ENCODE measurements at regions of chr11 and their contacts with region 1.

Region 1: GRCh38 chr11:64688534-64688982 is 34.4 kb downstream of the NRXN2 start:
- DNase-seq: peak; percentile 96
- ATAC-seq: peak; percentile 98
- H3K4me3 Mint-ChIP-seq: peak overlapping the region; percentile 38
- H3K27ac Mint-ChIP-seq: no peak overlapping the region
- H3K4me1 Mint-ChIP-seq: peaks cover 26% of the 10 kb centered on the region
- H3K27me3 Mint-ChIP-seq: peaks cover 9% of the 10 kb centered on the region
- CTCF ChIP-seq: peak; percentile 93

Region 2: DNA sequence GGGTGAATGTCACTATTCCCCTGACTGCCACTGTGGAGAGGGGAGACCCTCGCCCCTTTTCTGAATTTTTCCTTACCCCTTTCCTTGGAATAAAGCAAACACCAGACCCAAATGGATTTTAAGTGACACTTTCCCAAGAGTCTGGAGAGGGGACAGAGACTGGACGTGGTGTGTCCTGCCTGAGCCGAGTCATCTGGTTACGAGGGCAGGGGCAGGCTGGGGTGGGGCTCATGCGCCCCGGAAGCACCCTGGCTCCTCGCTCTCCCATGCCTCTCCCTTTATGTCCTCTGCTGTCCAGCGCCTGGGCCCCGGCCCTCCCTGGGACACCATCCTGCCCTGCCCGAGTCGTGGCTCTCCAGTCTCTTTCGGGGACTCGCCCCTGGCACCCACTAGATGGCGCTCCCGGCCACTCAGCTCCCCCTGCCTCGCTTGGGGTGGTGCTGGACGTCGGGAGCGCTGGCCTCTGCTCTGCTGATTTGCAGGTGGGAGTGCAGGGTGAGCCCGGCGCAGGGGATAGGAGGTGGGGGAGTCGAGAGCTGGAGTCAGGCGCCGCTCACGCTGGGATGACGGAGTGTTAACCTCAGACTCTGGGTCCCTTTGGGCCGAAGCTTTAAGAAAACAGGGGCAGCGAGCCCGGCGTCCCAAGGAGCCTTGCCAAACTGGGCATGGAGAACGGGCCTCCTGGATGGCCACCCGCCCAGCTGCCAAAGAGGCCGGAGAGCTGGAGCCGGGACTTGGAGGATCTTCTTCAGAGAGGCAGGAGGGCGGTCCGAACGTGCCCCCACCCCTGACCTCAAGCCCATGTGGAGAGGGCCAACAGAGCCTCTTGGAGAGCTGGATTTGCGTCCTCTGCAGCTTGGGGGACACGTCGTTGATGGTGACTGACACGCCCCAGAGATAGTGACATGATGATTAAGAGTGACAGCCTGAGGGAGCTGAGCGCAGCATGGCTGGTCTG is 239.7 kb before region 1 on chr11:
- CTCF ChIA-PET with region 1: interaction called, 10 read pairs
- POLR2A ChIA-PET with region 1: no interaction called
- intact Hi-C with region 1: no loop called
- DNase-seq: peak; percentile 82
- ATAC-seq: peak; percentile 80
- H3K4me3 Mint-ChIP-seq: peak overlapping the region; percentile 61
- H3K27ac Mint-ChIP-seq: no peak overlapping the region
- H3K4me1 Mint-ChIP-seq: peaks cover 9% of the 10 kb centered on the region
- H3K27me3 Mint-ChIP-seq: peaks cover 7% of the 10 kb centered on the region
- CTCF ChIP-seq: peak; percentile 81

Region 3: GRCh38 chr11:64703048-64703447 is 14.5 kb after region 1 on chr11:
- CTCF ChIA-PET with region 1: interaction called, 55 read pairs
- POLR2A ChIA-PET with region 1: interaction called, 4 read pairs
- intact Hi-C with region 1: no loop called
- DNase-seq: no peak
- ATAC-seq: no peak
- H3K4me3 Mint-ChIP-seq: no peak overlapping the region
- H3K27ac Mint-ChIP-seq: no peak overlapping the region
- H3K4me1 Mint-ChIP-seq: no peaks in the 10 kb centered on the region
- H3K27me3 Mint-ChIP-seq: peaks cover 8% of the 10 kb centered on the region
- CTCF ChIP-seq: no peak

Region 4: GRCh38 chr11:64723117-64723906 is 34.8 kb after region 1 on chr11 and contains the start of gene NRXN2:
- CTCF ChIA-PET with region 1: interaction called, 13 read pairs
- POLR2A ChIA-PET with region 1: interaction called, 4 read pairs
- intact Hi-C with region 1: loop called (anchors 5 kb)
- DNase-seq: peak; percentile 89
- ATAC-seq: peak; percentile 97
- H3K4me3 Mint-ChIP-seq: peak within 1 kb of the TSS; percentile 62
- H3K27ac Mint-ChIP-seq: peak within 1 kb of the TSS; percentile 59
- H3K4me1 Mint-ChIP-seq: peaks cover 18% of the 10 kb centered on the region
- H3K27me3 Mint-ChIP-seq: peaks cover 15% of the 10 kb centered on the region
- CTCF ChIP-seq: peak; percentile 99
- total RNA-seq, gene NRXN2: 0.07 to 0.22 TPM

Region 5: DNA sequence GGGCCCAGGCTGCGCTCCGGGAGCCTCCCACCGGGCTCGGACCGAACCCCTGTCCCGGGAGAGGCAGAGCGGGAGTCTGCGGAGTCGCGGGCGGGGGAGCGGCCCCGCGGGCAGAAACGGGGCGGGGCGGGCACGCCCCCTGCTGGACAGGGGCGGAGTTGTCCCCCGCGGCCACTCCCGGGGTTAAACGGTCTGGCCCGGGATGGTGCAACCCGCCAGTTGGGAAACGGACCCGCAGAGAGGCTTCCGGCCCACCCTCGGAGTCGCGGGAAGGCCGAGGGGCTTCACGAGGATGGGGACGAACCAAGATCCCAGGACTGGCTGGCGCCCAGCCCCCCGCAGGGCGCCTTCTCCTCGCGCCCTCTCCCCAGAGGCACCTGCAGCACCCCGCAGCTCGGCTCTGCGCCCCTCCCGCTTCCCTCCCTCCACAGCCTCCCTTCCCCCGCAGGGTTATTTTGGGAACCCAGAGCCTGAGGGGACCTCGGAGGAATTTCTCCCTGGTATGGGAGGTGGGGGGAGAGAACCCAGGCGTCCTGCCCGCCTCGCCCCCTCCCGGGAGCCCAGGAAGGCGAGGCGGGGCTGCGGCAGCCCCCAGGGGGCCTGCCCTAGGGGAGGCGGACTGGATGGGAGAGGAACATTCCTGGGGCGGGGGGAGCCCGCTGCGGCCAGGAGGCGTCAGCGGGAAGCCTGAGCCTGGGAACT is 54.5 kb after region 1 on chr11:
- CTCF ChIA-PET with region 1: interaction called, 54 read pairs
- POLR2A ChIA-PET with region 1: interaction called, 3 read pairs
- intact Hi-C with region 1: loop called (anchors 10 kb)
- DNase-seq: peak; percentile 73
- ATAC-seq: peak; percentile 38
- H3K4me3 Mint-ChIP-seq: peak overlapping the region; percentile 31
- H3K27ac Mint-ChIP-seq: no peak overlapping the region
- H3K4me1 Mint-ChIP-seq: peaks cover 20% of the 10 kb centered on the region
- H3K27me3 Mint-ChIP-seq: no peaks in the 10 kb centered on the region
- CTCF ChIP-seq: peak; percentile 91

Region 6: GRCh38 chr11:64767344-64768299 is 79.1 kb after region 1 on chr11:
- CTCF ChIA-PET with region 1: interaction called, 11 read pairs
- POLR2A ChIA-PET with region 1: no interaction called
- intact Hi-C with region 1: no loop called
- DNase-seq: peak; percentile 95
- ATAC-seq: peak; percentile 48
- H3K4me3 Mint-ChIP-seq: no peak overlapping the region
- H3K27ac Mint-ChIP-seq: peak overlapping the region; percentile 86
- H3K4me1 Mint-ChIP-seq: peaks cover 91% of the 10 kb centered on the region
- H3K27me3 Mint-ChIP-seq: no peaks in the 10 kb centered on the region
- CTCF ChIP-seq: peak; percentile 94

Measured in activated CD8-positive, alpha-beta T cell treated with anti-CD3 and anti-CD28 coated beads for 36 hours (primary cell).